ENCODE measurements at regions of chr12 and their contacts with region 1.

Region 1: DNA sequence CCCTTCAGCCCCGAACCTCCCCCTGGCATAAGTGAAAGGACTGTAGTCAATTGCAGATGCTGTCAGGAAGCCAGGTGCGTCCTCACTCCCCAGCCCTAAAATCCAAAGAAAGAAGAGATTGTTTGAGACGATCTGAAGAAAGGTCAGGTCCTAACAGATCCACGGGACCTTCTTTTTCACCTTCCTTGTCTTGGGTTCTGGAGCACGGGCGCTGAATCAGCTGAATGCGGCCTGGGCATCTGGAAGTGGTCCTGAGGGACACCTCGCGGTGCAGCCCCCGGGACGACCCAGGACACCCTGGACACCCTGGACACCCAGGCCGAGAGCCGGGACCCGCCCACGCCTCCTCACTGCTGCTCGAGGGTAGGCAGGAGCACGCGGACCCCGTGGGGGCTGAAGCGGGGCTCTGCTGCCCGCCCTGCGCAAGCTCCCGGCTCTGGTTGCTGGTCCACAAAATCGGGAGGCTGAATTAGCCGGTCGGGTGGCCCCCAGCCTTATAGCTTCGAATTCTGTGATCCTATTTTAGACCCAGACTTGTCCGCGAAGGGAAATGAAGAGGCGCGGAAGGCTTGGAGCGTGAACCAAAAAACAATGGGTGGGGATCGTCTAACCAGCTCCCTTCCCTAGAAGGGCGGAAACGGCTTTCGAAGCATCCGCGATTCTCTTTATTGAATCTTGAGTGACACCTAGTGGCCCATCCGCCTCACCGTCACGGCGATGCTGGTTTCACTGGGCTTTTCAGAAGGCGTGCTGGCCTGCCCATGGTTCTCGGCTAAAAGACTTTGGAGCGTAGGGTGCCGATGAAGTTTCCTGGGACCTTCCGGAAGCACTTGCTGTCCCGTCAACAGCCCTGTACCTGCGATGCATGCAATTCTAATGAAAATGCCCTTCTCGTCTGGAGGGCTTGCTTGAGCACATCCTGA is 46.4 kb upstream of the PLXNC1 start:
- DNase-seq: peak; percentile 80
- H3K4me3 ChIP-seq: peak overlapping the region; percentile 63
- H3K27ac ChIP-seq: peak overlapping the region in 1 of 2 experiments; percentile 35; a peak in 1 of 4 replicates
- H3K4me1 ChIP-seq: peaks cover 8 to 14% of the 10 kb centered on the region in 2 experiments; a peak in 2 of 4 replicates
- H3K27me3 ChIP-seq: no peaks in the 10 kb centered on the region
- CTCF ChIP-seq: peak; percentile 87
- EP300 ChIP-seq: no peak
- RAD21 ChIP-seq: peak; percentile 88

Region 2: GRCh38 chr12:92987362-92987761 is 1114.6 kb before region 1 on chr12:
- CTCF ChIA-PET with region 1: interaction called, 28 read pairs
- POLR2A ChIA-PET with region 1: no interaction called
- DNase-seq: peak; percentile 48
- H3K4me3 ChIP-seq: no peak overlapping the region; a peak in 1 of 4 replicates
- H3K27ac ChIP-seq: peak overlapping the region in 1 of 2 experiments; percentile 34; a peak in 1 of 4 replicates
- H3K4me1 ChIP-seq: peaks cover 0 to 5% of the 10 kb centered on the region in 2 experiments; a peak in 1 of 4 replicates
- H3K27me3 ChIP-seq: no peaks in the 10 kb centered on the region
- CTCF ChIP-seq: peak; percentile 72
- EP300 ChIP-seq: no peak
- RAD21 ChIP-seq: peak; percentile 91

Region 3: DNA sequence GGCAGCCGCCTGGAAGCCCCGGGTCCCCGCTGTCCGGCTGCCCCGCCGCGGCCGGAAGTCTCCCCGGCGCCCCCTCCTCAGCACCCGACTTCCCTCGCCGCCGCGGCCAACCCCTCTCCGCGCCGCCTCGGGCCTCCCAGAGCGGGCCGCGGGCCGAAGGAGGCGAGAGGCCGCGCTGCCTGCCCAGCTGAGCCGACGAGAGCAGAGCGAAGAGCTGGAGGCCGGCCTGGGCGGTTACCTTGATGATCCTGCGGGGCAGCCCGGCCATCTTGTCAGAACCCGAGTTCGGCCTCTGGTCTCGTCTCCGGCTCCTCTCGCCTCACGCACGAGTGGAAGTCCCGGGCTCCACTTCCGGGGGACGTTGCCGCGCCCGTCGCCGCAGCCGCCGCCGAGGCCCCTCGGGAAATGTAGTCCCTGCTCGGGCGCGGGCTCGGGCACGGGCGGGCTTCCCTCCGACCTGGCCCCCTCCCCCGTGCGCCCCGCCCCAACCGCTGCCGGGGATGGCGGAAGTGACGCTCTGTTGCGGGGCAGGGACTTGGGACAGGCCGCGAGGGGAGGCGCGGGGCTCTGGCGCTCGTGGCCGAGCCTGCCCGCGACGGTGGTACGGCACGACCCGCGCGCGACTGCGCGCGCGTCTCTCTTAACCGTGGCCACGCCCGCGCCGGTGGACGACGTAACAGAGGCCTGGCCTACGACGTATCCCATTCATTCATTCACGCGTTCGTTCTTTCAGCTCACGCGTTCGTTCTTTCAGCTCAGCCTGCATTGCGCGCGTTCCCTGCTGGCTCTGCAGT is 660.2 kb before region 1 on chr12 and contains the start of gene UBE2N:
- CTCF ChIA-PET with region 1: interaction called, 10 read pairs
- POLR2A ChIA-PET with region 1: no interaction called
- DNase-seq: peak; percentile 98
- H3K4me3 ChIP-seq: peak within 1 kb of the TSS; percentile 83 to 91
- H3K27ac ChIP-seq: peak within 1 kb of the TSS; percentile 84 to 95
- H3K4me1 ChIP-seq: peaks cover 10 to 14% of the 10 kb centered on the region in 2 experiments; a peak in 3 of 4 replicates
- H3K27me3 ChIP-seq: no peaks in the 10 kb centered on the region
- CTCF ChIP-seq: no peak
- EP300 ChIP-seq: no peak; a peak in 2 of 4 replicates
- RAD21 ChIP-seq: no peak
- polyA plus RNA-seq, gene UBE2N: 102 and 121 TPM in 2 replicates

Region 4: DNA sequence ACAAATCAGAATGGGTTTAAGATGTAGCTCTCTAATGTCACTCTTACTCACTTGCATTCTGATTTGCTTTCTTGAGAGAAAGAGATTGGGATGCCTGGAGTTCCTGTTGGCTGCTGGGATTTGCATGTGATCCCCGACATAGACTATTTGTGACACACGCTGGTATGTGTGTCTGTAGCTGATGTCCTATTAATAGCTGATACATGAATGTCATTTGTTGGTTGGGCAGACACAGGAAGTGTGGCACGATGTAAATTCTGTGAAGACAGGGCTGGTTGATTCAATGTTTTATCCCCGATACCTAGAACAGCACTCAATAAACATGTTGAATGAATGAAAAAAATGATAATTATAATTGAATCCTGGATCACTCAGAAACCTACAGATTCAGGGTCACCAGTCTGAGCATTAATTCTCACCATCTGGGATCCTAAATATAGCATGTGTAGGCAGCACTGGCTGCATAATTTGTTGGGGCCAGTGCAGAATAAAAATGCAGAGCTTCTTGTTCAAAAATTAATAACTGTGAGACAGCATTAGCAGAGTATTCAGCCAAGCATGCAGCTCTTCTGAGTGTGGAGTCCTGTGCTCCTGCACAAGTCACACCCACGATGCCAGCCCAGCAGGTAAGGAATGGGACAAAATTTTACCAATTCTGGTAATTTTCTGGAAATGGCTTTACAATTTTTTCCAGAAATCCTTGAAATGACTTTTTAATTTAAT is 565.1 kb before region 1 on chr12:
- CTCF ChIA-PET with region 1: interaction called, 25 read pairs
- POLR2A ChIA-PET with region 1: interaction called, 3 read pairs
- DNase-seq: peak; percentile 15
- H3K4me3 ChIP-seq: no peak overlapping the region
- H3K27ac ChIP-seq: peak overlapping the region in 1 of 2 experiments; percentile 24; a peak in 1 of 4 replicates
- H3K4me1 ChIP-seq: peaks cover 5 to 13% of the 10 kb centered on the region in 2 experiments; a peak in 3 of 4 replicates
- H3K27me3 ChIP-seq: no peaks in the 10 kb centered on the region
- CTCF ChIP-seq: no peak
- EP300 ChIP-seq: no peak
- RAD21 ChIP-seq: no peak

Region 5: DNA sequence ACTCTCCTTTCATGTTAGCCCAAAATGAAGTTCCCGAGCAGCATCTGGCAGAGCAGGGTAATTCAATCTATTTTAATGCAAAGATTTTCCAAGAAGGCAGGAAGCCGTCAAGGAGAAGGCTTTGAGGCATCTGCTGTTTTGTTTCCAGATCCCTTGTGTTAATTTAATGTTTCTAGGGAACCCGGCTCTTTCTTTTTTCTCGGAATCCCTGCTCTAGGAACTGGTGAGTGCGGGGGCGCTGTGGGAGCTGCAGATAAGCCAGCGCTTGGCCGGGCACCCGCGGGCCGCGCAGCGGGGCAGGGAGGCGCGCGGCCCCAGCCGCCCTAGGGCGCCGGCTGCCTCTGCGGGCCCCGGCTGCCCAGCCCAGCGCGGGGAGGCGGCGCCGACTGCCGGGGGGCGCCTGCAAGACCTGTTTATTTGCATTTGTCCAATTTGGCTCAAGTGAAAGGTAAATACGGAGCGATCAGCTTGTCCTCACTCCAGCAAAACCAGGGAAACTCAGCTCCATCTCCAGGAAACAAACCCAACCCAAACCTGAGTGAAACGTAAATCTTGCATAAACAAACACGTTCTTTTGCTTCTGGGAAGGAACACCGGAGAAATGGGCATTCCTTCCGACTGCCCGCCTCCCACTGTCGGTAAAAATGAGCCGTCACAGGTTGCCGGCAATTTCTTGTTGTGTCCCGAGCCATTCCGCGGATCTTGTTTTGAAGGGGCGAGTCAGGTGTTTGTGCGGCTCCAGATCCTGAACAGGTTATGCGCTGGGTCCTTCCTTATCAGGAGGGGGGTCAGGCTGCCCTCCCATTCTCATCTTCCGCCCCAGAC is 359.7 kb before region 1 on chr12:
- CTCF ChIA-PET with region 1: interaction called, 26 read pairs
- POLR2A ChIA-PET with region 1: no interaction called
- DNase-seq: peak; percentile 93
- H3K4me3 ChIP-seq: peak overlapping the region; percentile 68 to 73
- H3K27ac ChIP-seq: peak overlapping the region; percentile 90 to 97
- H3K4me1 ChIP-seq: peaks cover 6 to 9% of the 10 kb centered on the region in 2 experiments; a peak in 2 of 4 replicates
- H3K27me3 ChIP-seq: no peaks in the 10 kb centered on the region
- CTCF ChIP-seq: peak; percentile 50
- EP300 ChIP-seq: 0 out of 4 replicates have a peak, but pooled peaks of 1 of the 2 experiments have one; percentile 6
- RAD21 ChIP-seq: peak; percentile 47

Region 6: DNA sequence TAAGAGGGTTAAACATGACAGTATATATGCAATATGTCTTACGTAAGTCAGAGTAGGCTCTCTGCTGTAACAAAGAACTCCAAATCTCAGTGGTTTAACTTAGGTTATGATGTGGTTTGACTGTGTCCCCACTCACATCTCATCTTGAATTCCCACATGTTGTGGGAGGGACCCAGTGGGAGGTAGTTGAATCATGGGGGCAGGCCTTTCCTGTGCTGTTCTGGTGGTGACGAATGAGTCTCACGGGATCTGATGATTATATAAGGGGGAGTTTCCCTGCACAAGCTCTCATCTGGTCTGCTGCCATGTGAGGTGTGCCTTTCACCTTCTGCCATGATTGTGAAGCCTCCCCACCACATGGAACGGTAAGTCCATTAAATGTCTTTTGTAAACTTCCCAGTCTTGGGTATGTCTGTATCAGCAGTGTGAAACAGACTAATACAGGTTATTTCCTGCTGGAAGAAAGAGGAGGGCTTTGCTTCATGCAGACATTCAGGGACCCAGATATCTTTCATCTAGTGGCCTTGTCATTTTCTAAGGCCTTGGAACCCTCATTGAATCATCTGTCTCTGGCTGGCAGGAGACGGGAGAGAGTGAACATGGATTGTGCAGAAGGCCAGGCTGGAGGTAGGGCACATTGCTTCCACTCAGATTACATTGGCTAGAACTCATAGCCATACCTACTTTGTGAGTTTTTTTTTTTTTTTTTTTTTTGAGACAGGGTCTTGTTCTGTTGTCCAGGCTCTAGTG is 328.7 kb before region 1 on chr12:
- CTCF ChIA-PET with region 1: interaction called, 128 read pairs
- POLR2A ChIA-PET with region 1: no interaction called
- DNase-seq: no peak
- H3K4me3 ChIP-seq: peak overlapping the region in 1 of 2 experiments; percentile 33; a peak in 1 of 4 replicates
- H3K27ac ChIP-seq: no peak overlapping the region
- H3K4me1 ChIP-seq: peaks cover 2 to 25% of the 10 kb centered on the region in 2 experiments; a peak in 3 of 4 replicates
- H3K27me3 ChIP-seq: no peaks in the 10 kb centered on the region
- CTCF ChIP-seq: no peak
- EP300 ChIP-seq: no peak
- RAD21 ChIP-seq: no peak

Region 7: DNA sequence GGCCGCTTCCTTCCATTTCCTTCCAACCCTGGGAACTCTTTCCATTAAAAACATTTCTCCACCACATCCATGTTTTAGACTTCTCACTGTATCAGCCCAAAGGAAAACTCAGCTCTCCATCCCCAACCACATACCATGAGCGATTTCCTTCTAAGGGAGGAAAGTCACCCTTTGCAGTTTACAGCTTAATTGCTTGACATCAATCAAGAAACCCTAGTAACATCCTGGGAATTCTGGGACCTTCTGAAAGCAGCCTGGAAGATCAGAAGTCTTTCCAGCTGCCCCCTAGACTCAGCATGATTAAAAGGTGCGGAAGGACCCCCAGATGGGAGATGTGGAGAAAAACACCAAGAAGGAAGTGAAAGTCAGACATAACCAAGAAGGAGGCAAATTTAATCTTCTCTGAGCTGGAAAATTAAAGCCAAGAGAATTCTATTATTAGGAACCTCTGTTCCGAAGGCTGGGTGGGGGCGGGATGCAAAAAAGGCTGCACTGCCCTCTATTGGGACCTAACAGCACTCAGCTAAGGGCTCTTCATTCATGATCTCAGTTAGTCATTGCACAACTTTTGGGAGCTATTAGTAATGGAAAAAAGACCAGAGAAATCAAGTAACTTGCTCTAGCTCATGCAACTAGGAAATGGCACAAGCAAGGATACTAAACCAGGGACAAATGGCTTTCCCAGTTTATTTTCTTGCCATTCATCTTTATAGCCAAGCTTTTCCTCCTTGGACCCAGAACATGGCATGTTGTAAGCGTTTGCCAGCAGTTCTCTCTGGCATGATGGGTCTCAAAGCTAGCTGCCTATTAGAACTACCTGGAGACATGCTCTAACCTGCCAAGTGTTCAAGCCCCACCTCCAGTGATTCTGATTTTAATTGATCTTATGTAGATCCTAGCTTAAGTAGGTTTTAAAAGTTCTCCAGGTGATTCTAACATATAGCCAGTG is 26.7 kb before region 1 on chr12:
- CTCF ChIA-PET with region 1: interaction called, 68 read pairs
- POLR2A ChIA-PET with region 1: no interaction called
- DNase-seq: peak; percentile 48
- H3K4me3 ChIP-seq: no peak overlapping the region
- H3K27ac ChIP-seq: peak overlapping the region in 1 of 2 experiments; percentile 11; a peak in 1 of 4 replicates
- H3K4me1 ChIP-seq: peaks cover 0 to 7% of the 10 kb centered on the region in 2 experiments; a peak in 2 of 4 replicates
- H3K27me3 ChIP-seq: no peaks in the 10 kb centered on the region
- CTCF ChIP-seq: peak; percentile 66
- EP300 ChIP-seq: no peak
- RAD21 ChIP-seq: peak; percentile 73

Measured in SK-N-SH (cell line).